ENCODE measurements at regions of chr11 and their contacts with region 1.

Region 1: GRCh38 chr11:32316858-32317642 is 118.3 kb downstream of the WT1 start:
- DNase-seq: no peak
- H3K4me3 ChIP-seq: no peak overlapping the region
- CTCF ChIP-seq: no peak
- POLR2A ChIP-seq: no peak

Region 2: GRCh38 chr11:31619980-31620379 is 697.1 kb before region 1 on chr11:
- intact Hi-C with region 1: no loop called
- DNase-seq: no peak
- H3K4me3 ChIP-seq: no peak overlapping the region
- CTCF ChIP-seq: no peak
- POLR2A ChIP-seq: no peak

Region 3: DNA sequence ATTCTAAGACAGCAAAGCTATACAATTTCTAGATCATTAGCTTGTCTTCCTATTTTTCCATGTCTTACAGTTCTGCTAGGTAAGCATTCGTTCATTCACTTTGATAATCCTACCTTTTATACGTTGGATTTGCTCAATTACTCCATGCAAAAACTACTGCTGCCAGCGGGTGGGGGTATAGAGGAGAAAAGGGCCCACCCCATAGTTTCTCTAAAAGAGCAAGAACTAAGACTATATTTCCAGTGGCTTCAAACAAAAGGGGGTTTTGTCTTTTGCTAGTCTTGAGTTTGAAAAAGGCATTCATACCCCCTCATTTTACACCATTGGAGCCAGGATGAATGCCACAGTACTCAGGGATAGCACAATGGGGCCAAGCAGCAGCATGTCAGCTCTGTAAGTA is 37.4 kb before region 1 on chr11:
- intact Hi-C with region 1: no loop called
- DNase-seq: no peak
- H3K4me3 ChIP-seq: no peak overlapping the region
- CTCF ChIP-seq: no peak
- POLR2A ChIP-seq: no peak

Region 4: DNA sequence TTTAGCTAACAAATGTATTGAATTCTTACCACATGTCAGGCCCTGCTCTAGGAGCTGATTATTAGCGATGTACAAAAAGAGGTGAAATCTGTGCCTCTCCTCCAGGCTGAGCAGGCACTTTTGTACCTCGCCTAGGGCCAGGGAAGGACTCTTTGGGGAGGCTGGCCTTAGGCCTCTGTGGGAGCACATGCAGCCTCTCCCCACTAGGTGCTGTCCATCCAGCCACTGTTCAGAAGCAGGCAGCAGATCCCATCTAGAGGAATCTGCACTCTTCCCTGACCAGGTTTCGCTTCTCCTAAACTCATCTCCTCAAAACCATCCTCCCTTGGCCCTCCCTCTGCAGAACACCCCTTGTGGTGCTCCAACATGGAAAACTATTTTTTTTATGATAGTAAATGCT is 170.2 kb after region 1 on chr11:
- intact Hi-C with region 1: no loop called
- DNase-seq: no peak
- H3K4me3 ChIP-seq: no peak overlapping the region
- CTCF ChIP-seq: no peak
- POLR2A ChIP-seq: no peak

Region 5: GRCh38 chr11:32792948-32793475 is 476.0 kb after region 1 on chr11:
- intact Hi-C with region 1: loop called (anchors 5 kb)
- DNase-seq: peak; percentile 47 to 89
- H3K4me3 ChIP-seq: no peak overlapping the region
- CTCF ChIP-seq: no peak
- POLR2A ChIP-seq: no peak

Measured in lower leg skin (tissue), 4 donors.